ENCODE measurements at regions of chr19 and their contacts with region 1.

Region 1: DNA sequence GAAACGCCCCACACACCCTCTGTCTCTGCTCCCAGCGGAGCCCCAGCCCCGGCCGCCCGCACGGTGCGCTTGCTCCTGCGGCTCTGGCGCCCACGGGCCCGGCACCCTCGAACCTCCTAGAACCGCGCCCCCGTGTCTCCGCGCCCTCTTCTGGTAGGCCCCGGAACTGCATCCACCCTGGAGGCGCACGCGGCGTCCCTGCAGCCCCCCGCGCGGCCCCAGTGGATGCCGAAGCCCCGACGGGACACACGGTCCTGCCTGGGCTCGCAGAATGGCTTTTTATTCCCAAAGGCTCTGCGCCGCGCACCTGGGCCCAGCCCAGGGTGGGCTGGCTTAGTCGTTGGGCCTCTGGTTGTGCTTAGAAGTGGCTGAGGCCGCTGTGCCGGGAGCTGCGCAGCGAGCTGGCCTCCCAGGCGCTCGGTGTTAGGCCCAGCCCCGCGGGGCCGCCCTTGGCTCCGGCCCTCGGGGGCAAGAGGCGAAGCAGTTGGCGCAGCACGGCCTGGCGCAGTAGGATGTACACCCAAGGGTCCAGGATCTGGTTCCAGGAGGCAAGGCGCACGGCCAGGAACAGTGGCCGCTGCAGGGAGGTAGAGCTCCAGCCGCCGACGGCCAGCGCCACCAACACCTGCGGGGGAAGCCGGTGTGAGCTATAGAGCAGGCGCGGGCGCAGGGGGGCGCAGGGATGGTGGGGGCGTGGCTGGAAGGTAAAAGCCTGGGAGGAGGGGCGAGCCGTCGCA is 2.8 kb downstream of the PTGER1 start:
- DNase-seq: peak; percentile 96
- H3K4me3 Mint-ChIP-seq: no peak overlapping the region
- H3K27ac Mint-ChIP-seq: no peak overlapping the region
- H3K4me1 Mint-ChIP-seq: peaks cover 26% of the 10 kb centered on the region
- H3K27me3 Mint-ChIP-seq: peaks cover 16% of the 10 kb centered on the region

Region 2: GRCh38 chr19:14432791-14433553 is 39.4 kb before region 1 on chr19 and contains the start of gene PKN1:
- intact Hi-C with region 1: loop called (anchors 2 kb)
- DNase-seq: peak; percentile 90
- H3K4me3 Mint-ChIP-seq: peak within 1 kb of the TSS; percentile 84
- H3K27ac Mint-ChIP-seq: peak within 1 kb of the TSS; percentile 82
- H3K4me1 Mint-ChIP-seq: peaks cover 35% of the 10 kb centered on the region
- H3K27me3 Mint-ChIP-seq: peaks cover 12% of the 10 kb centered on the region
- total RNA-seq, gene PKN1: 172 and 180 TPM in 2 replicates